CD4-positive, alpha-beta T cell (primary cell): ENCODE measurements at regions of chr15 and their contacts with region 1.

Region 1: GRCh38 chr15:92877000-92877399 is 23.1 kb upstream of the CHD2 start:
- DNase-seq: no peak
- ATAC-seq: no peak
- H3K4me3 ChIP-seq: no peak overlapping the region
- H3K4me3 Mint-ChIP-seq: no peak overlapping the region
- H3K27ac ChIP-seq: no peak overlapping the region
- H3K27ac Mint-ChIP-seq: no peak overlapping the region
- H3K4me1 ChIP-seq: peaks cover 39% of the 10 kb centered on the region
- H3K4me1 Mint-ChIP-seq: peaks cover 48% of the 10 kb centered on the region
- H3K27me3 ChIP-seq: no peaks in the 10 kb centered on the region
- H3K27me3 Mint-ChIP-seq: no peaks in the 10 kb centered on the region
- CTCF ChIP-seq: no peak

Region 2: GRCh38 chr15:92864127-92864814 is 12.7 kb before region 1 on chr15:
- CTCF ChIA-PET with region 1: interaction called, 3 read pairs
- POLR2A ChIA-PET with region 1: interaction called, 13 read pairs
- intact Hi-C with region 1: loop called in 1 of 2 experiments (anchors 2 kb)
- DNase-seq: no peak
- ATAC-seq: no peak
- H3K4me3 ChIP-seq: no peak overlapping the region
- H3K4me3 Mint-ChIP-seq: no peak overlapping the region
- H3K27ac ChIP-seq: no peak overlapping the region
- H3K27ac Mint-ChIP-seq: no peak overlapping the region
- H3K4me1 ChIP-seq: no peaks in the 10 kb centered on the region
- H3K4me1 Mint-ChIP-seq: no peaks in the 10 kb centered on the region
- H3K27me3 ChIP-seq: no peaks in the 10 kb centered on the region
- H3K27me3 Mint-ChIP-seq: no peaks in the 10 kb centered on the region
- CTCF ChIP-seq: no peak